Dorsolateral prefrontal cortex (tissue), 120 donors: ENCODE measurements at regions of chr2 and their contacts with region 1.

Region 1: DNA sequence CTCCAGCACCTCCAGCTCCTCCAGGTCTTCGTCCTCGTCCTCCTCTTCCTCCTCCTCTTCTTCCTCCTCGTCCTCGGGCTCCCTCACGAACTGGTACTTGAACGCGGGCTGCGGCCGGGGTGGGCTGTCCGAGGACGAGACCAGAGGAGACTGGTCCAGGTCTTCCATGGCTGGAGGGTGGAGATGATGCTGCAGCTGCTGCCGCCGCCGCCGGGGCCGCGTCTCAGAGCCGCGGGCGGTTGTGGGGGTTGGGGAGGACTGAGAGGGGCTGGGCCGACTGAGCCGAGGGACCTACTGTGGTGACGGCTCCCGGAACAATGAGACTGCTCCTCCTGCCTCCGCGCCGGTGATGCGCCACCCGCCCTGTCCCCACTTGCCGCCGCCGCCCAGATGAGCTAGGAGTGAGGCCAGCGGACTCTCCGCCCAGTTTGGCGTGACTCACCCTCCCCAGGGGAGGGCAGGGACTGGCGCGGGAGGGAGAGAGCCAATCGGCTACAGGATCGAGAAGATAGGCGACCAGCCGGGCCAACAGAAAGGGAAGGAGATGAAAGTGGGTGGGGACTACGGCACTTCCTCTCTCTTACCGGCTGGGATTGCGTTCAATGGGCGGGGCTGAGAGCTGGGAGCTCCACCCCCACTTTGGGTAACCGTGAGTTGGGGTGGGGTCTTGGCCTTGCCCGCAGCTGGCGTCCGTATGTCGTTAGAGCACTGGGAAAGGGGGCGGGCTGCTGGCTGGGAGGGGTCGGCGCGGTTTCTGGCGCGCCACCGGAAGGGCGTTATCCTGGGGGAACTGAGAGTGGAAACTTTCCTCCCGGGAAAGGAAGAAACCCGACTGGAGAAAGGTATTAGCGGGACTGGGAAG is at the start of gene RTN4:
- DNase-seq: peak; percentile 97 to 100 (median 99)
- H3K4me3 ChIP-seq: peak within 1 kb of the TSS; percentile 70 to 99 (median 94)
- H3K27ac ChIP-seq: peak within 1 kb of the TSS; percentile 95 to 100 (median 99)
- H3K27me3 ChIP-seq: no peaks in the 10 kb centered on the region
- CTCF ChIP-seq: peak in 23 of 56 donors; percentile 5 to 56 (median 18)
- total RNA-seq, gene RTN4: 342 to 975 (median 727) TPM

Region 2: DNA sequence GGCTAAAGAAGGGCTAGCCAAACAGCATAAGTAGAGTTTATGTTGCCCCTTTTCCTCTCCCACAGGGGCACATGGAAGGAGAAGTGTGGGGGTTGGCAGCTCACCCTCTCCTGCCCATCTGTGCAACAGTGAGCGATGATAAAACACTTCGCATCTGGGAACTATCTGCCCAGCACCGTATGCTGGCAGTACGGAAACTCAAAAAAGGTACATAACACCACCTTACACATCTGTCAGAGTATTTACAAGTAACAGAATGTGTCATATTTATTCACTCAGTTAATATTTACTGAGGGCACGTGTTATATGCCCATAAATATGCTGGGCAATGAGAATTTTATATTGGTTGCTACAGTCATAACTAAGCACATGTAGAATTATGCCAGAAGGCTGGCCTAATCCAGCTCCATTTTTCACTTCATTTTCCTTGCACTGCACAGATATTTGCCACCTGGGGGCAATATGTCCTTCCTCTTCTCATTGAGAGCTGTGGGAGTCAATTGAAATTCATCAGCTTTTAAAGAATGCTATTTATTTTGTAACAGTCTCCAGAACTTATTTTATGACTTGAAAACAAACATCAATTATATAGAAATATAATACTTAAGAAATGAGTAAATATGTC is 150.7 kb before region 1 on chr2:
- intact Hi-C with region 1: loop called in 1 of 2 experiments (anchors 2 kb)
- DNase-seq: peak in 1 of 10 donors; percentile 51
- H3K4me3 ChIP-seq: no peak overlapping the region
- H3K27ac ChIP-seq: peak overlapping the region in 49 of 59 donors; percentile 1 to 88 (median 44)
- H3K27me3 ChIP-seq: no peaks in the 10 kb centered on the region
- CTCF ChIP-seq: peak; percentile 21 to 86 (median 68)

Region 3: GRCh38 chr2:55010149-55010591 is 40.2 kb before region 1 on chr2:
- intact Hi-C with region 1: loop called (anchors 2 to 5 kb)
- DNase-seq: peak in 9 of 10 donors; percentile 50 to 76 (median 62)
- H3K4me3 ChIP-seq: peak overlapping the region; percentile 33 to 73 (median 59)
- H3K27ac ChIP-seq: peak overlapping the region; percentile 5 to 90 (median 78)
- H3K27me3 ChIP-seq: no peaks in the 10 kb centered on the region
- CTCF ChIP-seq: peak in 7 of 56 donors; percentile 6 to 40 (median 12)

Region 4: GRCh38 chr2:55014962-55015939 is 35.1 kb before region 1 on chr2:
- intact Hi-C with region 1: loop called (anchors 2 to 5 kb)
- DNase-seq: peak in 4 of 10 donors; percentile 46 to 72 (median 62)
- H3K4me3 ChIP-seq: peak overlapping the region in 3 of 59 donors; percentile 4 to 9 (median 7)
- H3K27ac ChIP-seq: peak overlapping the region in 51 of 59 donors; percentile 0 to 83 (median 55)
- H3K27me3 ChIP-seq: no peaks in the 10 kb centered on the region
- CTCF ChIP-seq: peak; percentile 40 to 89 (median 77)

Region 5: DNA sequence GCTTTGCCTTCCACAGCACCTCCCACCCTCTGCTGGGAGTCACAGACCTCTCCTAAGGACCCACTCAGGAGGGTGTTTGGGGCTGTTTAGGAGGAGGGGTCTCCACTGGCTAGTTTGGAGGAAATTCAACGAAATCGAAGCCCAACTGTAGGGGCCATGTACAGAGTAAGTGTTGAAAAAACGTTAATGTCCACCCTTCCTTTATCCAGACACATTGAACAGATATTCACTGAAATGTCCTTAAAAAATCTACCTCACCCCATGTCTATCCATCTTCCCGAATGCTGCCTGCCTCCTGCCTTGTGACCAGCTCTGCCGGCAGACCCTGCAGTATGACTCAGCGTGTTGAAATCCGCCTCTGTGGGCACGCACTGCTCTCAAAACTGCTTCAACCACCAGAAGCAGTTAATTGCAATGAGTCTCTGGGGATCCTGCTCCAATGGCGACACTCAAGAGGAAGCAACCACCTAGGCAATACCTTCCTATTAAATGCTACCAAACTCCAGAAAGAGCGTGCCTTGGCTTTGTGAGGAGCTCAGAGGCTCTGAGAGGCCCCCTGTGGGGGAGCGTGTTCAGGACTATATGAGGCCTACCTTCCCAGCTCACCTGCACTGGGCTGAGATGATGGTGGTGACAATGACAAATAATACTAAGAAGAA is 61.3 kb after region 1 on chr2:
- intact Hi-C with region 1: loop called (anchors 2 kb)
- DNase-seq: peak in 9 of 10 donors; percentile 45 to 91 (median 78)
- H3K4me3 ChIP-seq: peak overlapping the region in 42 of 59 donors; percentile 0 to 56 (median 25)
- H3K27ac ChIP-seq: peak overlapping the region; percentile 84 to 99 (median 96)
- H3K27me3 ChIP-seq: no peaks in the 10 kb centered on the region
- CTCF ChIP-seq: peak in 2 of 56 donors; percentile 5 to 14

Region 6: GRCh38 chr2:55168221-55169154 is 118.1 kb after region 1 on chr2:
- intact Hi-C with region 1: loop called (anchors 1 kb)
- DNase-seq: peak; percentile 43 to 91 (median 74)
- H3K4me3 ChIP-seq: peak overlapping the region in 38 of 59 donors; percentile 0 to 47 (median 24)
- H3K27ac ChIP-seq: peak overlapping the region; percentile 3 to 98 (median 93)
- H3K27me3 ChIP-seq: no peaks in the 10 kb centered on the region
- CTCF ChIP-seq: peak; percentile 66 to 94 (median 85)